Ascending aorta (tissue), 2 donors: ENCODE measurements at regions of chr19 and their contacts with region 1.

Region 1: GRCh38 chr19:2663920-2664571 is 38.4 kb downstream of the GNG7 start:
- DNase-seq: no peak
- H3K4me3 ChIP-seq: no peak overlapping the region
- H3K27ac ChIP-seq: no peak overlapping the region
- H3K4me1 ChIP-seq: no peaks in the 10 kb centered on the region
- H3K27me3 ChIP-seq: no peaks in the 10 kb centered on the region
- CTCF ChIP-seq: no peak

Region 2: DNA sequence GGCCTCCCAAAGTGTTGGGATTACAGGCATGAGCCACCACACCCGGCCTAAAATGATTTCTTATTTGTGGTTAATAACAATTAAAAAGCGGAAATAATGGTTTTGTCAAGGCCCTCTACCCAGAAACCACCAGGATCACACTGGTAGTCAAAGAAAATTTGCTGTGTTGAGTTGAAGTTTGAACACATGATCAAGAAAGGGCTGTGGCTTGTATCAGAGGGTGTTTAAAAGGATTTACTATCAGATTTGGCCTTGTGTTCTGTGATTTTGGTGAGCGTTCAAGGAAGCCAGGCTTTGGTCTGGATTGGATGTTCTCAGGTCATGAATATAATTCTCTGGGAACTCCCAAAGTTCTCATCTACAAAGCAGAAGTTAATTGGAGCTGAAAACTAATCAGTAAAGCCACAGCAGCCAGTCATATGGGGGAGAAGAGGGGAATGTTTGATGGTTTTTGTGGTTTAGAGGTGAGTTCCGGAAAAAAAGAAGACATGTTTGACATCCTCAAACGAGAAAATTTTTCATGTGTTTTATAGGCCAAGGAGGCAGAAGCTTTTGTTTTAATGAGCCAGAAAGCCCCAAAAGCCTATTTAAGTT is 192.5 kb after region 1 on chr19:
- intact Hi-C with region 1: loop called (anchors 10 kb)
- DNase-seq: no peak
- H3K4me3 ChIP-seq: no peak overlapping the region
- H3K27ac ChIP-seq: no peak overlapping the region
- H3K4me1 ChIP-seq: no peaks in the 10 kb centered on the region
- H3K27me3 ChIP-seq: no peaks in the 10 kb centered on the region
- CTCF ChIP-seq: no peak